Activated CD4-positive, alpha-beta memory T cell treated with anti-CD3 and anti-CD28 coated beads, Interleukin-2, amount 10 ng/mL, durations not matched to agents 7 days and 5 days (primary cell): ENCODE measurements at regions of chr1 and their contacts with region 1.

Region 1: DNA sequence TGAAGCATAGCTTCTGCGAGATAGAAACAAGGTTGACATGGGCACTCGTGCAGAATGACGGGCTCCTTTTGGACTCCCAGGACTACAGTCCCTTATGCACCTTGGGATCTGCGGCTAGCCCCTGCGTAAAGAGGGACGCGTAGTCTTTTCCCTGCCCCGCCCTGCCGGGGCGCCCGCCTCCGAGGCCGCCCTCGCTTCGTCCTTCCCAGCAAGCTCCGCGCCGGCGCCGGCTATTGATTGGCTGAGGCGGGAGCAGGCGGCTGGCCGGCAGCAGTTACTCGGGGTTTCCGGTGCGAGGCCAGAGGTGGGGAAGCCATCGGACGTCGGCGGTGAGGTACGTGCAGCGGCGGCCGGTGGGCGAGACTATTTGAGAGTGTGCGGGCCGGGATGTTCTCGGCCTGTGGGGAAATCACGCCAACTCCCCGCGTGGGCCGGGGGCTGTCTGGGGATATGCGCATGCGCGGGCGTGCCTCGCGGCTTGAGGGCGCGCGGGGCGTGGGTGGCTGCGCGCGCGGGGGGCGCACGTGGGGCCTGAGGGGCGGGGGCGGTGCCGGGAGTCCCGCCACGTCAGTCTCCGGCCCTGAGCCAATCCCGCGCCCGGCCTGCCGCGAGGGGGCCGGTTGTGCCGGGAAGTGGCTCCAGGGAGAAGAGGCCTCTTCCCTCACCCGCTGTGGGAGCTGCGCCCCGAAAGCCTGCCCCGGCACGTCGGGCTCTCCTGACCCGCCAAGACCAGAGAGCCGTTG is at the start of gene TXLNA:
- DNase-seq: peak; percentile 92
- H3K4me3 Mint-ChIP-seq: peak within 1 kb of the TSS; percentile 88
- H3K27ac Mint-ChIP-seq: peak within 1 kb of the TSS; percentile 96
- H3K4me1 Mint-ChIP-seq: peaks cover 43% of the 10 kb centered on the region
- H3K27me3 Mint-ChIP-seq: no peaks in the 10 kb centered on the region
- total RNA-seq, gene TXLNA: 79.8 to 81.2 TPM

Region 2: DNA sequence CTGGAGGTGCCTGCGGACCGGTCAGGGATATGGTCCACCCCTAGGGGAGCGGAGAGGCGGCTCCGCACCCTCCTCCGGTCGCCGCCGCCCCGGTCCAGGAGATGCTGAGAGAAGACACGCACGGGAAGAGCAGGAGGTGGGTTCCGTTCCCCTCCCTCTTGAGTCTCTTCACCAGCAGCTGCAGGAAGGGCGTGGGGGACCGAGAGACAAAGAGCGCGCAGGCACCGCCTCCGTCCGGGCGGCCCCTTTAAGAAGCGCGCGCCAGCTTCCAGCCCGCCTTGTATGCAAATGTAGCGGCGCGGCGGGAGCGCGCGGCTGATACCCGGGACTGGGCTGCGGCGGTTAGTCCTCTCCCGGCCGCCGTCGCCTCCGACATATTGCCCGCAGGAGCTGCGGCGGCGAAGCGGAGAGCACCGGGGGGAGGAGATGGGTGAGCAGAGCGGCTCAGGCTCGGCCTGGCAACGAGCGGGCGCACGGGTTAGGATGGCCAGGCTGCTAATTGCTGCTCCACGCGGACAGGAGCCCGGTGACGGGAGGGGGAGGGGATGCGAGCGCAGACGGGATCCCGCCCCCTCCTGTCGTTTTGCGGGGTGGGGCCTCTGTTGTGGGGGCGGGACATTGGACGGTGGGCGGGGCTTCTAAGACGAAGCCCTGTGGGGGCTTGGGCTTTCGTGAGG is 106.9 kb before region 1 on chr1 and contains the start of gene TMEM39B:
- CTCF ChIA-PET with region 1: interaction called, 3 read pairs
- POLR2A ChIA-PET with region 1: interaction called, 19 read pairs
- DNase-seq: peak; percentile 96
- H3K4me3 Mint-ChIP-seq: peak within 1 kb of the TSS; percentile 77
- H3K27ac Mint-ChIP-seq: peak within 1 kb of the TSS; percentile 83
- H3K4me1 Mint-ChIP-seq: peaks cover 46% of the 10 kb centered on the region
- H3K27me3 Mint-ChIP-seq: no peaks in the 10 kb centered on the region
- total RNA-seq, gene TMEM39B: 24.5 to 28.0 TPM

Region 3: DNA sequence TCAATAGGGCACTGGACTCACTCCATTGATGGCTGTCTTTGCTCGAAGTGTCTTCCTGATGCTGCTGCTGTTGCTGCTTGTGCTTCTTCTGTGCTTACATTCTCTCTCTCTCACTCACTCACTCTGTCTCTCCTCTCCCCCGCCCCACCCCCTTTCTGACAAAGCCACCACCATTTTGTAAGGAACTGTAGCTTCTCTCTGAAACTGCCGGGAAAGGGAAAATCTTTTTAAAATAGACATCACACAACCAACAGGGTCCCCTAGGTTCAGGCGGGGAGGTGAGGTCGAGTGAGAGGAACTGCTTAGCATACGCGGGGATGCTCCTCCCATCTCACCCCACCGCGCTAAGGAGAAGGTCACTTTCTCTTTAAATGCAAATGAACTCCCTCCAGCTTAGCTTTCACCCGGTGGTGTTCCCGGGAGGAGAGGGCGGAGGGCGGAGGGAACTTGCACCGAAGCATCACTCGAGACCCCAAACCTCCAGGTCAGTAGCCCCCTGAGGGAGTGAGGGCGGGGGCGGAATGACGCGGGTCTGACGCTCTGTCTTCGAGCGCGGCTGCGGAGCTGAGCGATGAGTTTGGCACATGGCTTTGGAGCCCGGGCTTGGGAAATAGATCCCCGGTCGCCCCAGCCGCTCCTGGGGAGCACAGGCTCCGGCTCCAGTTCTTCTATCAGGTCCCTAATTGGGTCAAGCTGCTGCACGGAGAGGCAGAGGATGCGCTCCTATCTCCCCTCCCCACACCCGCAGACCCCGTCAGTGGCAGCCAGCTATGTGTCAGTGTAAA is 20.8 kb after region 1 on chr1 and contains the start of gene CCDC28B:
- CTCF ChIA-PET with region 1: interaction called, 4 read pairs
- POLR2A ChIA-PET with region 1: interaction called, 109 read pairs
- DNase-seq: peak; percentile 54
- H3K4me3 Mint-ChIP-seq: peak within 1 kb of the TSS; percentile 72
- H3K27ac Mint-ChIP-seq: peak within 1 kb of the TSS; percentile 79
- H3K4me1 Mint-ChIP-seq: peaks cover 72% of the 10 kb centered on the region
- H3K27me3 Mint-ChIP-seq: no peaks in the 10 kb centered on the region
- total RNA-seq, gene CCDC28B: 20.2 to 23.5 TPM

Region 4: GRCh38 chr1:32205401-32206370 is 26.1 kb after region 1 on chr1 and contains the start of gene IQCC:
- CTCF ChIA-PET with region 1: interaction called, 4 read pairs
- POLR2A ChIA-PET with region 1: interaction called, 109 read pairs
- DNase-seq: peak; percentile 87
- H3K4me3 Mint-ChIP-seq: peak within 1 kb of the TSS; percentile 81
- H3K27ac Mint-ChIP-seq: peak within 1 kb of the TSS; percentile 60
- H3K4me1 Mint-ChIP-seq: peaks cover 45% of the 10 kb centered on the region
- H3K27me3 Mint-ChIP-seq: no peaks in the 10 kb centered on the region
- total RNA-seq, gene IQCC: 3.7 to 3.8 TPM